ENCODE measurements at regions of chrX and their contacts with region 1.

Region 1: DNA sequence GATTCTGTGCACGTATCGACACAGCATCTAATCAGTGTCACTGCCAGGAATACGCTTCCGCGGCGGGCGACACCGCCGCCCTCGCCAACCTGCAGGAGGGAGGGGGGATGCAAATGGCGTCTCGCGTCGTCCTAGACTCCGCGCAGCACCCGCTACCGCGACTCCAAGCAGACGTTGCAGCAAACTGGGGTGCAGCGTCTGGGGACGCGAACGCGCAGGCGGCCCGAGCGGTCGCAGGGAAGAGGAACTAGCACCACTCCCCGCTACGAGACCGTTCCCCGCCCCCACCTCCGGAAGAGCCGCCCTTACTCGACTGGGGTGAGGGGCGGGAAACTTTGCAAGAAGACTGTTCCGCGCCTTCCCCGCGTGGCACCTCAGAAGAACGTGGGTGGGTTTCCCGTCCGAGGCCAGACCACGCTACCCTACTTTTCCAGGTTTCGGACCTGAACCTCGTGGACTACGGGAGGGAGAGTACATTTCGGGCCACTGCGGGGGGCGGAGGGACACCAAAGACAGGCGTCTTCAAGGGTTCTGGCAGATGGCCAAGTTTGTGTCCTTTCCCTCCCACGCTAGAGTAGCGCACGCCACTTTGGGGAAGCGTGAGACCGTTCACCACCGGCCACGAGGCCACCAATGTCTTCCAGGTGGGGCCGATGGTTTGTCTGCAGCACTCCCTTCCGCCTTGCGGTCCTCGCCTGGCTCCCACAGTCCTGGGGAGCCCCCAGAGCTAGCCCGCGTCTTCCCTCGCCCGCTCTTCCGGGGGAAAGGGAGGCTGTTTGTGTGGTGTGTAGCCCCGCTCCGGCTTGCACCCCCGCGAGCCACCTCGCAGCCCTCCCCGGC is 78.0 kb upstream of the BCOR start:
- DNase-seq: peak; percentile 84
- ATAC-seq: peak; percentile 37
- H3K4me3 Mint-ChIP-seq: peak overlapping the region; percentile 80
- H3K27ac Mint-ChIP-seq: peak overlapping the region; percentile 99
- H3K4me1 Mint-ChIP-seq: peaks cover 25% of the 10 kb centered on the region
- H3K27me3 Mint-ChIP-seq: no peaks in the 10 kb centered on the region

Region 2: GRCh38 chrX:39578354-39578869 is 597.3 kb before region 1 on chrX:
- CTCF ChIA-PET with region 1: no interaction called
- POLR2A ChIA-PET with region 1: no interaction called
- intact Hi-C with region 1: loop called in 1 of 2 experiments (anchors 2 kb)
- DNase-seq: peak; percentile 83
- ATAC-seq: peak; percentile 91
- H3K4me3 Mint-ChIP-seq: peak overlapping the region; percentile 35
- H3K27ac Mint-ChIP-seq: peak overlapping the region; percentile 84
- H3K4me1 Mint-ChIP-seq: peaks cover 28% of the 10 kb centered on the region
- H3K27me3 Mint-ChIP-seq: no peaks in the 10 kb centered on the region

Region 3: DNA sequence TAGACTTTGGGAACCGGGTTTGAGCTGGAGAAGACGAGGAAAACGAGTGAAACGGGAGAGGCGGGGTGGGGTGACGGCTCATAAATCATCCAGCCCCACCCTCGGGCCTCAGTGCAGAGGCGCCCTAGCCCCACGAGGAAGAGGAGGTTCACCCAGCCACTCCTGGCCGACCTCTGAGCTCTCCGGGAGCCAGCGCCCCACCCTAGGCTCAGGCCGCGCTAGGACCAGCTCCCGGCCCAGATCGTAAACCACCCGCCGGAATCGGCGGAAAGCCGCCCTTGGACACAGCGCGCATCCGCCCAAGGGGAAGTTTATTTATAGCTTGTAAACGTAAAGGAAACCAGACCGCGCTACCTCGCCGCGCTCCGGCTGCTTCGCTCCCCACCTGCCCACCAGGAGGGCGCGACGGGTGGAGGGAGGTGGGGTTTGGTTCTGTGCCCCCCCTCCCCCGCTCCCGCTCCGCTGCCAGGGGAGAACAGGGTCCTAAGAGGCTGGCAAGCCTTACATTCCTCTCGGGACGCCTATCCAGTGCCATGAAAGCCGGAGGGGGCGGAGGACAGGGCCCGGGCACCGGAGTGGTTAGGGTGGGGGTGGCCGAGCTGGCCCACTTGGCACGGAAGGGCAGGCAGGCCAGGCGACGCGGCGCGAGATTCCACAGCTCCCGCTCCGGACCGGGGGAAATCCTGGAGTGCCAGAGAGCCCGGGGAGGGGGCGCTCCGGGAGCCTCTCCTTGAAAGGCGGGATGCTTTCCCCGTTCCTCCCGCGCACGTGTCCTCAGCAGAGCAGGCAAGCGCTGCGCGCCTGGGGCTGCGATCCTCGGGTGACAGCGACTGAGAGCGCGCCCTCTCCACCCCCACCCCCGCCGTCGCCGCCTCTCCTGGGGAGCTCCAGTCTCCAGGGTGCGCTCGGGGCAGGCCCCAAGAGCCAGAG is 162.2 kb before region 1 on chrX:
- CTCF ChIA-PET with region 1: interaction called, 3 read pairs
- POLR2A ChIA-PET with region 1: no interaction called
- intact Hi-C with region 1: loop called (anchors 1 to 5 kb)
- DNase-seq: peak; percentile 58
- ATAC-seq: peak; percentile 35
- H3K4me3 Mint-ChIP-seq: peak overlapping the region; percentile 63
- H3K27ac Mint-ChIP-seq: peak overlapping the region; percentile 31
- H3K4me1 Mint-ChIP-seq: peaks cover 25% of the 10 kb centered on the region
- H3K27me3 Mint-ChIP-seq: peaks cover 16% of the 10 kb centered on the region

Region 4: GRCh38 chrX:40153335-40154249 is 22.1 kb before region 1 on chrX:
- CTCF ChIA-PET with region 1: interaction called, 4 read pairs
- POLR2A ChIA-PET with region 1: no interaction called
- intact Hi-C with region 1: loop called (anchors 1 to 2 kb)
- DNase-seq: peak; percentile 87
- ATAC-seq: peak; percentile 82
- H3K4me3 Mint-ChIP-seq: peak overlapping the region; percentile 70
- H3K27ac Mint-ChIP-seq: peak overlapping the region; percentile 37
- H3K4me1 Mint-ChIP-seq: peaks cover 13% of the 10 kb centered on the region
- H3K27me3 Mint-ChIP-seq: no peaks in the 10 kb centered on the region